ENCODE measurements at regions of chr1 and their contacts with region 1.

Region 1: DNA sequence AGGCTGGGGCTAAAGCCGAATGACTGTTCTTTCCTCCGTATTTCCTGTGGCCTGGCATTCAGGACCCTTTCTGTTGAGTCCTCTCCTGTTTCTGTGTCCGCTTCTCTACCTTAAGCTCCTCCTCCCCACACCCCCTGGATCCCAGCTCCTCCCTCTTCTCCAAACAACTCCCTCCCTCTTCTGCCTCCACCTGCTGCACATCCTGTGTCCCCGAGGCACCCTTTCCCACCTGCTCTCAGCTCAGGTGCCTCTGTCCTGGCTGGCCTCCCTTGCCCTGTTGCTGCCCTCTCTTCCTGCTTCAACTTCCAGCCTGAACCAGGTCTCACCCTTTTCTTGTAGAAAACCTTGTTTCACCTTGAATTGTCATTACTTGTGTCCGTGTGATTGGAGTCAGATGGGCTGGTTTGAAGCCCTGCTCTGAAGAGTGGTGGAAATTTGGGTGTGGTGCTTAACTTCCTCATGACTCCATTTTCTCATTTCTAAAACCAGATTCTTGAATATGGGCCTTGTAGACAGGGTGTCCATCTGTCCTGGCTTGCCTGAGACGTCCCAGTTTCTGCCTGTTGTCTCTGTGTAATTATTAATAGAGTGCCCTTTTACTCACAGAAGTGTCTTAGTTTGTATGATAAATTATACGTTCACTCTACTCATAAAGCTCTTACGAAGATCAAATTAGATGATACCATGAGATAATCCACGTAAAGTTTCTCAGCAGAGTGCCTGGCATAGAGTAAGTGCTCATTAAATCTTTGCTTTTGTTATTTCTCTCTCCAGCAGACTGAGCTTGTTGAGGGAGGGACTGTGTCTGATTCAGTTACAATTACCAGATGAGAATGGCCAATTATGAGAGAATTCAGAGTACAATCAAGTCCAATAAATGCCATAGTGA is 58.9 kb upstream of the TRABD2B start:
- DNase-seq: no peak
- ATAC-seq: no peak
- H3K4me3 ChIP-seq: no peak overlapping the region
- H3K27ac ChIP-seq: no peak overlapping the region
- H3K4me1 ChIP-seq: no peaks in the 10 kb centered on the region
- H3K27me3 ChIP-seq: no peaks in the 10 kb centered on the region
- CTCF ChIP-seq: no peak

Region 2: GRCh38 chr1:47459253-47459788 is 596.8 kb before region 1 on chr1:
- intact Hi-C with region 1: loop called in 1 of 2 experiments (anchors 5 kb)
- DNase-seq: no peak
- ATAC-seq: no peak
- H3K4me3 ChIP-seq: no peak overlapping the region
- H3K27ac ChIP-seq: no peak overlapping the region
- H3K4me1 ChIP-seq: no peaks in the 10 kb centered on the region
- H3K27me3 ChIP-seq: peaks cover 6 to 65% (median 7%) of the 10 kb centered on the region in 3 donors
- CTCF ChIP-seq: no peak

Region 3: GRCh38 chr1:47738560-47739182 is 317.4 kb before region 1 on chr1:
- intact Hi-C with region 1: loop called in 1 of 2 experiments (anchors 2 kb)
- DNase-seq: peak; percentile 45 to 64
- ATAC-seq: peak in 3 of 4 donors; percentile 66 to 72 (median 71)
- H3K4me3 ChIP-seq: no peak overlapping the region
- H3K27ac ChIP-seq: no peak overlapping the region
- H3K4me1 ChIP-seq: no peaks in the 10 kb centered on the region
- H3K27me3 ChIP-seq: peaks cover 0 to 17% (median 3%) of the 10 kb centered on the region in 3 donors
- CTCF ChIP-seq: peak; percentile 60

Measured in psoas muscle (tissue), 8 donors.